Activated naive CD4-positive, alpha-beta T cell treated with anti-CD3 and anti-CD28 coated beads for 36 hours (primary cell): ENCODE measurements at regions of chr21 and their contacts with region 1.

Region 1: GRCh38 chr21:38733973-38734546 is 71.7 kb upstream of the ETS2 start:
- DNase-seq: peak; percentile 77
- H3K4me3 Mint-ChIP-seq: peak overlapping the region; percentile 69
- H3K27ac Mint-ChIP-seq: no peak overlapping the region
- H3K4me1 Mint-ChIP-seq: peaks cover 8% of the 10 kb centered on the region
- H3K27me3 Mint-ChIP-seq: peaks cover 17% of the 10 kb centered on the region

Region 2: DNA sequence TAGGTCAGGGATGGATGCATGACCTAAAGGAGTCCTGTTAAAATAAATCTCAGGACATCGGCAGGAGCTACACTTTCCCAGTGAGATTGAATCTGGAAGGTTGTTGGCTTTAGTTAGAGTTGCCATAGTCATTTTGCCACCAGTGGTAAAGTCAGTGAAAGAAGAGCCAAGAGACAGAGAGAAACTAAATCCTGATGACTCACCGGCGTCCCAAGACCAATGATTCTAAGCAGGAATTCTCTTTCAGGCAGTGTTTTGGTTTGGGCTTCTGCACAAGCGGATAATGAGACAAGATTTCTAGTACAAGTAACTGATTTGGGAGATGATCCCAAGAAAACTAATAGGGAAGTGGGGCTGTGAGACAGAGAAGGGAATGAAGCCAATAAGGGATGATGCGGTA is 17.1 kb before region 1 on chr21:
- CTCF ChIA-PET with region 1: interaction called, 10 read pairs
- intact Hi-C with region 1: no loop called
- DNase-seq: no peak
- H3K4me3 Mint-ChIP-seq: no peak overlapping the region
- H3K27ac Mint-ChIP-seq: no peak overlapping the region
- H3K4me1 Mint-ChIP-seq: no peaks in the 10 kb centered on the region
- H3K27me3 Mint-ChIP-seq: no peaks in the 10 kb centered on the region

Region 3: GRCh38 chr21:38805328-38806152 is 71.5 kb after region 1 on chr21 and contains the start of gene ETS2:
- CTCF ChIA-PET with region 1: interaction called, 6 read pairs
- intact Hi-C with region 1: loop called (anchors 1 kb)
- DNase-seq: peak; percentile 84
- H3K4me3 Mint-ChIP-seq: peak within 1 kb of the TSS; percentile 90
- H3K27ac Mint-ChIP-seq: peak within 1 kb of the TSS; percentile 91
- H3K4me1 Mint-ChIP-seq: peaks cover 33% of the 10 kb centered on the region
- H3K27me3 Mint-ChIP-seq: no peaks in the 10 kb centered on the region
- total RNA-seq, gene ETS2: 22.4 to 25.6 TPM

Region 4: GRCh38 chr21:39137248-39138178 is 403.5 kb after region 1 on chr21:
- CTCF ChIA-PET with region 1: interaction called, 4 read pairs
- intact Hi-C with region 1: loop called (anchors 1 kb)
- DNase-seq: no peak
- H3K4me3 Mint-ChIP-seq: no peak overlapping the region
- H3K27ac Mint-ChIP-seq: no peak overlapping the region
- H3K4me1 Mint-ChIP-seq: no peaks in the 10 kb centered on the region
- H3K27me3 Mint-ChIP-seq: peaks cover 2% of the 10 kb centered on the region

Region 5: GRCh38 chr21:39445321-39446269 is 711.5 kb after region 1 on chr21 and contains the start of gene LCA5L:
- CTCF ChIA-PET with region 1: no interaction called
- intact Hi-C with region 1: loop called (anchors 10 kb)
- DNase-seq: peak; percentile 86
- H3K4me3 Mint-ChIP-seq: peak within 1 kb of the TSS; percentile 95
- H3K27ac Mint-ChIP-seq: peak within 1 kb of the TSS; percentile 94
- H3K4me1 Mint-ChIP-seq: peaks cover 23% of the 10 kb centered on the region
- H3K27me3 Mint-ChIP-seq: peaks cover 9% of the 10 kb centered on the region
- total RNA-seq, gene LCA5L: 0.26 TPM in 1 of 2 experiments, not detected in the other